ENCODE measurements at regions of chr2 and their contacts with region 1.

Region 1: DNA sequence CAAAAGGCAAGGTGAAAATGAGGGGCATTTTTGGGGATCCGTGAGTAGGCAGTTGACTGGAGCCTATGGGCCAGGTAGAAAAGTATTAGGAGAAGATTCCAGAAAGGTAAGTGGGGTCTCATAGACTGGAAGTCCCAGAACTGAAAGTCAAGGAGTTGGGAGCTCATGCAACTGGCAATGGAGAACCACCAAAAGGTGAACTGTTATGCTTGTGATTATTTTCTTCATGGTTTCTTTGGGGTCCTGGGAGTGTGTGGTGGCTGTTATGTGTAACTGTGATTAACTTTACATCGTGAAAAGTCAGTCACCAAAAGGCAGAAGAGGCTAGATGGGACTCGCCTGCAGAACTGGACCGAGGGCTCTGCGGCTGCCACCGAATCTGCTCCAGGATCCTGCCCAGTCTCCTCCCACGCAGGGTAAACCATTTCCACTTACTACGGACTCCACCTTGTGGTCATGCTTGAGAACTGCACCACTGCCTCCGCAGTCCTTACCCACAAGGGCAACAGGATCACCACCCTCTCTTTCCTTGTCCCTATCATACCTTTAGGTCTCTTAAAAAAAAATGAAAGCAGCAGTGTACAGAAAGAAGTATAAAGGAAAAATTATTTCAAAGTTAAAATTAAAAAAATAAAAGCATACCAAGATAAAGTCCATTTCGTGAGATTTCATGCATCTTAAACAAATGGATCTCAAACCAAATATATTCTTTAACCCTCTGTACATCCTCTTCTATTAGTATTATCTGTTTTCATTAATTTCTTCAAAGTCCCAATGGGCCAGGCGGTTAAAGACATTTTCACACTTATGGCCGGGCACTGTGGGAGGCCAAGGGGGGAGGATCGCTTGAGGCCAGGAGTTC is 15.6 kb upstream of the CEP68 start:
- DNase-seq: peak; percentile 94
- H3K4me3 ChIP-seq: no peak overlapping the region
- H3K27ac ChIP-seq: no peak overlapping the region
- H3K4me1 ChIP-seq: no peaks in the 10 kb centered on the region
- H3K27me3 ChIP-seq: no peaks in the 10 kb centered on the region
- CTCF ChIP-seq: peak; percentile 95 to 97 (median 95)
- POLR2A ChIP-seq: no peak

Region 2: GRCh38 chr2:64914735-64915509 is 125.7 kb before region 1 on chr2:
- intact Hi-C with region 1: loop called (anchors 5 kb)
- DNase-seq: peak; percentile 27
- H3K4me3 ChIP-seq: no peak overlapping the region
- H3K27ac ChIP-seq: no peak overlapping the region
- H3K4me1 ChIP-seq: no peaks in the 10 kb centered on the region
- H3K27me3 ChIP-seq: no peaks in the 10 kb centered on the region
- CTCF ChIP-seq: no peak
- POLR2A ChIP-seq: no peak

Region 3: DNA sequence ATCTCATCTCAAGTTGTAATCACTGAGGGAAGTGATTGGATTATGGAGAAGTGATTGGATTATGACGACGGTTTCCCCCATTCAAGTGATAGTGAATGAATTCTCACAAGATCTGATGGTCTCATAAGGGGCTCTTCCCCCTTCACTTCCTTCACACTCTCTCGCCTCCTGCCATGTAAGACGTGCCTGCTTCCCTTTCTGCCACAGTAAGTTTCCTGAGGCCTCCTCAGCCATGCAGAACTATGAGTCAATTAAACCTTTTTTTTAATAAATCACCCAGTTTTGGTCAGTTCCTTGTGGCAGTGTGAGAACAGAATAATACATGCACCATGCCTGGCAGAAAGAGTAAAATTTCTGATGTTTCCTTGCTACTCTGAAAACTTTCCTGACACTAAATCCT is 52.2 kb after region 1 on chr2:
- intact Hi-C with region 1: no loop called
- DNase-seq: no peak
- H3K4me3 ChIP-seq: no peak overlapping the region
- H3K27ac ChIP-seq: no peak overlapping the region
- H3K4me1 ChIP-seq: peaks cover 7% of the 10 kb centered on the region
- H3K27me3 ChIP-seq: no peaks in the 10 kb centered on the region
- CTCF ChIP-seq: no peak
- POLR2A ChIP-seq: no peak